Activated CD8-positive, alpha-beta T cell treated with anti-CD3 and anti-CD28 coated beads for 36 hours (primary cell): ENCODE measurements at regions of chr11 and their contacts with region 1.

Region 1: DNA sequence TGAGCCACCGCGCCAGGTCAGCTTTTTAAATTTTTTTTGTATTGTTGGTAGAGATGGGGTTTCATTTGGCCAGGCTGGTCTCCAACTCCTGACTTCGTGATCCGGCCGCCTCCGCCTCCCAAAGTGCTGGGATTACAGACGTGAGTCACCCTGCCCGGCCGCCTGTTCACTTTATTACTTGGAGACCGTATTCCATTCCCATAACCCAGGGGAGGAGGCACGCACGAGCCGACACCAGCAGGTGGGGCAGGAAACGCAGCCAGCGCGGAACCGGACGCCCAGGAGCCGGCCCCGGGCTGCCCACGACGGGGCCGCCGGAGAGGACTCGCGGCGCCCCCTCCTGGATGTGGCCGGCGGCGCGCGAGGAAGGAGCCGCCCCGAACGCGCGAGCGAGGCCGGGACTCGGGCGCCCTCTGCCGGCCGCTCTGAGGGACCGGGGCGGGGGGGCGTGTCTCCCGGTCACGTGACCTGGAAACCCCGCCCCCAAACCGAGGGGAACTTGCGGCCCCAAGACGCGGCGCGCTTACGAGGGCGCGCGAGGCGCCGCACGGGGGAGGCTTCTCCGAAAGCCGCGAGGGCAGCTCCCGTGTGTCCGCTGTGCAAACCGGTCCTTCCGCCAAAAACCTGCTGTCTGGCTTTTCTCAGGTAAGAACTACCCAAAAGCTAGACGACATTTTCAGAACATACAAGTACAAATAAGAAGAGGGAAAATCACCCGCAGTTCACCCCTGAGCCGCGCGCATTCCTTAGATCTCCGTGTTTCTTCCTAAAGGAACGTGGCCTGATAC is 11.6 kb upstream of the RNH1 start:
- DNase-seq: peak; percentile 86
- ATAC-seq: peak; percentile 97
- H3K4me3 Mint-ChIP-seq: peak overlapping the region; percentile 74
- H3K27ac Mint-ChIP-seq: peak overlapping the region; percentile 68
- H3K4me1 Mint-ChIP-seq: peaks cover 3% of the 10 kb centered on the region
- H3K27me3 Mint-ChIP-seq: no peaks in the 10 kb centered on the region
- CTCF ChIP-seq: peak; percentile 100

Region 2: DNA sequence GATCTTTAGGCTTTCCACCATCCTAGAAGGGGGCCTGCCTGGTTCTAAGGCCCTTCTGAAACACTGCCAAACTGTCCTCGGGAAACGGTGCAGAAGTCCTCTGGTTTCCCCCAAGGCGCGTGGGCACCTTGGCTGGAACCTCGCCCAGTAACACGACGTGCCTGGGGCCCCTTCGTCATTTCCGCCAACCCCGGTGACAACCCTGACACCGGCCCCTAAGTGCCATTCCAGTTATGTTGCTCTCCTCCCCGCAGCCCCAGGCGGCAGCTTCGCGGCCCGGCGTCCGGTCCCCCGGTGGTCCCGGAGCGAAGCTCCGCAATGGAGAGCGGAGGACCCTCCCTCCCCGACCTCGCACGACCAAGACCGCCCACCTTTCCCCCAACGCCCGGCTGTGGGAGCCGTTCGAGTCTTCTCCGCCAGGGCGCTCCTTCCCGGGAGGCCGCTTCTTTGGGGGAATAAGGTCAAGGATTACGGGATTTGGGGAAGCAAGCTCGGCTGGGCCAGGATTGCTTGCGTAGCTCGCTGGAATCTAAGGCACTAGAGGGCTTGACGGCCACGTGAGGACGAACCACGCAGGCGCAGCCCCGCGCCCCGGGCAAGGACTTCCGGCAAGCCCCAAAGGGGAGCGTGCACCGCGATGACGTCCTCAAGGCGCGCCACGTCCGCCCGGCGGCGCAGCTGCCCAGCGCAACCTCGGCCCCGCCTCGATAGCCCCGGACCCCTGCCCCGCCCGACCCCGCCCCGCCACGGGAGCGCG is 12.2 kb before region 1 on chr11:
- CTCF ChIA-PET with region 1: interaction called, 51 read pairs
- POLR2A ChIA-PET with region 1: interaction called, 8 read pairs
- intact Hi-C with region 1: no loop called
- DNase-seq: peak; percentile 97
- ATAC-seq: peak; percentile 80
- H3K4me3 Mint-ChIP-seq: peak overlapping the region; percentile 94
- H3K27ac Mint-ChIP-seq: peak overlapping the region; percentile 99
- H3K4me1 Mint-ChIP-seq: peaks cover 24% of the 10 kb centered on the region
- H3K27me3 Mint-ChIP-seq: no peaks in the 10 kb centered on the region
- CTCF ChIP-seq: no peak